Posterior vena cava (tissue), 2 donors: ENCODE measurements at regions of chr13 and their contacts with region 1.

Region 1: GRCh38 chr13:23375001-23375971 is 58.2 kb downstream of the SACS start:
- DNase-seq: peak; percentile 99

Region 2: DNA sequence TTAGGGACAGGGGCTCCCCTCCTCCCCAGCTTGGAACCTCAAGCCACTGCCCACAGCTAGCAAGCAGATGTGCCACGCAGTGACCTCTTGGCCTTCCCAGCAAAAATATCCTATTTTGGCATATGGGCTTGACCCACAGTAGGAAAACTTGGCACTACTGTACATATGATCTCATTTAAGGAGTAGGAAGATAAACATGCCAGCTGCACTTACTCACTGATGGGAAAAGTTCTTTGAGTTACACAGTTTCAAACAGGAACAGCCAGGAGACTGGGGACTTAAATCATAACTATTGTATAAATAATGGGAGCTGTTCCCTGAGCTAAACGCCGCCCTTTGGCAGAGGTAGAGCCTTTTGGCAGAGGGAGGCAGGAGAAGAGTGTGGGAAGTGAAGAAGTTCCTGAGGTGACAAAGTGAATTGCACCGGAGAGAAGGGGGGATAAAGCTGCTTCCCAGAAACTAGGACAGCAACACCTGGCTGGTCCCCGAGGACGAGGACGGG is 52.1 kb after region 1 on chr13:
- intact Hi-C with region 1: loop called in 1 of 2 experiments (anchors 5 kb)
- DNase-seq: peak; percentile 86